Heart right ventricle (tissue), 16 donors: ENCODE measurements at regions of chr1 and their contacts with region 1.

Region 1: DNA sequence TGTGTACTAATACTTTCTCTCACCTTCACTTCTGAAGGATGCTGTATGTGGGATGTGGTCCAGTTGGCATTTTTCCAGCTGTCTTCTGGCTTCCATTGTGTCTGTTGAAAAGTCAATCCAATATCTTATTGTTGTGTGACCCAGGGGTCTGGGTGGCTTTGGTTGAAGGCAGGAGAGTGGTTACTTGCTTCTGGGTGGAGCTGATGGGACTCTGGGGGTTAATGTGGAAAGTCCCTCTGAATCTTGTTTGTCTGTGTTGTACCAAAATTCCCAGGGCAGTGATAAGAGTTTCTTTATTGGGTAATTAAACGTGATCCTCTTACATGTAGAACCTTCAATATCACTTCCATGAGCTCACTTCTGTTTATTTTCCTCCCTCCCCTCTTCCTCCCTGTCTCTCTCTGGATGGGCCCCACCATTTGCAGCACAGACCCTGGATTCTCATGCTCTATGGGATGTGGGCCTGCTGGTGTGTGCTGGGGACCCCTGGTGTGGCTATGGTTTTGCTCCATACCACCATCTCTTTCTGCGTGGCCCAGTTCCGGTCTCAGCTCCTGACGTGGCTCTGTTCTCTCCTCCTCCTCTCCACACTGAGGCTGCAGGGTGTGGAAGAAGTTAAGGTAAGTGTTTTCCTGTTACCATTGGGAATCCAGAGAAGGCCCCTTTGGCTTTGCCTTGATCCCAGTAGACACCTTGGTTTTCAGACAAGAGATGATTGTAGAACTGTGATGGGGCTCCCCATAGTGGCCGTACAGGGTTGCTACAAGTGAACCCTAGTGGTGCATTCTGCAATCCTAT is 71.5 kb downstream of the HHAT start:
- DNase-seq: peak; percentile 27 to 52
- ATAC-seq: peak; percentile 81 to 94 (median 88)
- H3K4me3 ChIP-seq: no peak overlapping the region
- H3K27ac ChIP-seq: no peak overlapping the region
- H3K4me1 ChIP-seq: peaks cover 0 to 8% (median 0%) of the 10 kb centered on the region in 9 donors
- H3K27me3 ChIP-seq: no peaks in the 10 kb centered on the region
- CTCF ChIP-seq: peak; percentile 51 to 86 (median 81)

Region 2: DNA sequence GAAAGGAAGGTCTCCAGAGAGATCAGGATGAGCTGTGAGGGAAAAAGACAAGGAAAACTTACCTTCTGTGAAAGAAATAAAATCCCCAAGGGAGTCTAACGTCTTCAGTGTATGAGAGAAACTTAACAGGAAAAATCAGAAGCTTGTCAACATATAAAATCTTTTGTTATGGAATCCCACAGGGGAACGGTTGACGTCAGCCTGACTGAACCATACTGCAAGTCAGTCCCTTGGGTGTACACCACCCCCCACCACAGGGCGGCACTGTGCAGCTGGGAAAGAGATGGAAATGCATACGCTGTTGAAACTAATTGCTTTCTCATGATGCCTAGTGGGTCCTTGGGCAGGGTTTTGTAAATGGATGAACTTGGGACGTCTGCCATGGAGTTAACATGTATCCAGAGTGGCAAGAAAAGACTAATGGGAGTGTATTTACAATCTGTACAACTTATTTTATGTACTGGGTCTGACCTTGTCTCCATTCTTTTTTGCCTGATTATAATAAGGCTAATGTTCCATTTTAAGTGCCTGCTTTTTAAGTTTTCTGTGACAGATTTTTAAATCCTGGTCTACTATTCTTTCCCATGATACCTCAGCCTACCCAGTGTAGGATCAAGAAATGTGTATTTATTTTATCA is 549.8 kb before region 1 on chr1:
- intact Hi-C with region 1: loop called in 1 of 10 experiments (anchors 10 kb)
- DNase-seq: peak; percentile 28 to 34
- ATAC-seq: peak in 4 of 8 donors; percentile 20 to 46 (median 40)
- H3K4me3 ChIP-seq: no peak overlapping the region
- H3K27ac ChIP-seq: no peak overlapping the region
- H3K4me1 ChIP-seq: peaks cover 0 to 5% (median 0%) of the 10 kb centered on the region in 9 donors
- H3K27me3 ChIP-seq: no peaks in the 10 kb centered on the region
- CTCF ChIP-seq: peak in 7 of 9 donors; percentile 30 to 55 (median 35)

Region 3: DNA sequence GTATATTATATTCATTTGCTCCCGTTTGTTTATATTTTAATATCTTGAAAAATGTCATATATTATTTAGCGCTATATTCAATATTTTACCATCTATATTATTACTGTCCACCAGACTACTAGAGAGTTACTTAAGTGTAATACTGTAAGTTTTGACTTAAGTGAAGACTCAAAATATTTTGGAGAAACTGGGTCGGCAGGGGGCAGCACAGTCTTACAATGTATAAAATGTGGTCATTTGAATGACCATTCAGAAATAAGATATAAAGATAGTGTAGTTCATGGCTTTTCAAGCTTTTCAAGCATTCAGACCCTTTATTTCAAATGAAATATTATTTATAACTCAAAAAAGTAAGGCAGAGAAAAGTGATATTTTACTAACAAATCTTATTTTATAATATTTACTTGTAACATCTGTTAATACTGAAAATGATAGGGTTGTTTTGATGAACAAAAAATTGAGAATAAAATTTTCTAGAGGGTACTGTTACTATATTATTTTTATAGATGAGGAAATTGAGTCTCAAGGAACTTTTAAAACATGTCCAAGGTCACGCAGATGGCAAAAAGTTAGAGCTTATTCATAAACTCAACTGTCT is 256.7 kb before region 1 on chr1:
- intact Hi-C with region 1: loop called in 9 of 10 experiments (anchors 2 to 5 kb)
- DNase-seq: peak; percentile 70 to 77
- ATAC-seq: peak in 2 of 8 donors; percentile 38
- H3K4me3 ChIP-seq: no peak overlapping the region
- H3K27ac ChIP-seq: no peak overlapping the region
- H3K4me1 ChIP-seq: no peaks in the 10 kb centered on the region
- H3K27me3 ChIP-seq: peaks cover 0 to 16% (median 0%) of the 10 kb centered on the region in 7 donors
- CTCF ChIP-seq: peak; percentile 45 to 82 (median 72)

Region 4: DNA sequence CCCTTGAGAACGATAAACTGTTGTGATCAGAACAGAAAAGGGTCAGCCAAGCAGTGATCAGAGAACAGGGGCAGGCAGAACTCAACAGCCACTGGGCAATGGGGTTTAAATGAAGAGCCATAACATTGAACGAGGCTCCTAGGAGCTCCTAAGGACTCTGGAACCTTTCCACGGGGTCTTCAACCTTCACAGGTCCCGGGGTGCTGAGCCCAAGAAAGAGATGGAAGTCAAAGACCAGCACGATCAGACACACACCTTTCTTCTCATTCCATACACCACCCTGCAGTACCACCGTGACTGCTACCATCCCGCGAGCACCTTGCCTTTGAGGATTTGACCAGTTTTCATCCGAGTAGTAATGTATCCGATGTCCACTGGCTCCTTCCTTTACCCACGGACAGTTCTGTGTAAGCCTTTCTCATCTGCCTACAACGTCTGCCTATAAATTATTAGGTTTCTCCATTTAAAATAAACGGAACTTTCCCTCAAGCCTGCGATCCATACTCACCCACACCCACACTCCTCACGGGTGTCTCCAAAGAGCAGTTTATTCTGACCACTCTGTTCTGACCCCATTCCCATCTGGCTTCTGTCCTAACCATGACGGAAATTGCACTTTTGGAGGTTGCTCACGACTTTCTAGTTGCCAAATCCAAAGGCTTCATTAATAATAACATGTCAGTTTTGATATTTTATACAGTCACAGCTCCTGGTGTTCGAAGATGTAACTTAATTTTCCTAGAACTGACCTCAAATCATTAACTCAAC is 88.3 kb before region 1 on chr1:
- intact Hi-C with region 1: loop called in 3 of 10 experiments (anchors 5 to 10 kb)
- DNase-seq: peak in 1 of 2 donors; percentile 51
- ATAC-seq: peak; percentile 62 to 81 (median 72)
- H3K4me3 ChIP-seq: peak overlapping the region in 8 of 10 donors; percentile 13 to 49 (median 44)
- H3K27ac ChIP-seq: peak overlapping the region; percentile 19 to 88 (median 77)
- H3K4me1 ChIP-seq: peaks cover 0 to 24% (median 12%) of the 10 kb centered on the region in 9 donors
- H3K27me3 ChIP-seq: peaks cover 0 to 8% (median 0%) of the 10 kb centered on the region in 7 donors
- CTCF ChIP-seq: no peak

Region 5: GRCh38 chr1:211133836-211134669 is 733.8 kb after region 1 on chr1 and contains the start of gene KCNH1:
- intact Hi-C with region 1: loop called in 2 of 10 experiments (anchors 5 to 10 kb)
- DNase-seq: peak; percentile 51 to 78
- ATAC-seq: peak; percentile 91 to 98 (median 94)
- H3K4me3 ChIP-seq: peak within 1 kb of the TSS in 9 of 10 donors; percentile 29 to 49 (median 47)
- H3K27ac ChIP-seq: no peak within 1 kb of the TSS
- H3K4me1 ChIP-seq: peaks cover 3 to 18% (median 13%) of the 10 kb centered on the region in 9 donors
- H3K27me3 ChIP-seq: peaks cover 0 to 90% (median 72%) of the 10 kb centered on the region in 7 donors
- CTCF ChIP-seq: peak; percentile 76 to 95 (median 89)
- total RNA-seq, gene KCNH1: 0.09 TPM in 1 of 10 donors, not detected in the others

Region 6: GRCh38 chr1:211514030-211514754 is 1114.0 kb after region 1 on chr1:
- intact Hi-C with region 1: loop called in 2 of 10 experiments (anchors 10 kb)
- DNase-seq: peak; percentile 72
- ATAC-seq: peak; percentile 70 to 91 (median 85)
- H3K4me3 ChIP-seq: no peak overlapping the region
- H3K27ac ChIP-seq: peak overlapping the region in 1 of 10 donors; percentile 10
- H3K4me1 ChIP-seq: peaks cover 0 to 22% (median 9%) of the 10 kb centered on the region in 9 donors
- H3K27me3 ChIP-seq: peaks cover 0 to 13% (median 0%) of the 10 kb centered on the region in 7 donors
- CTCF ChIP-seq: peak; percentile 59 to 85 (median 76)